HAP-1 (cell line): ENCODE measurements at regions of chr7 and their contacts with region 1.

Region 1: GRCh38 chr7:87416682-87417587 is 58.5 kb downstream of the ABCB4 start:
- DNase-seq: peak; percentile 64 to 80
- H3K4me3 ChIP-seq: no peak overlapping the region
- H3K4me1 ChIP-seq: no peaks in the 10 kb centered on the region
- H3K27me3 ChIP-seq: no peaks in the 10 kb centered on the region

Region 2: GRCh38 chr7:87312215-87312865 is 104.6 kb before region 1 on chr7:
- in situ Hi-C with region 1: loop called (anchors 5 kb)
- DNase-seq: peak; percentile 45 to 70
- H3K4me3 ChIP-seq: no peak overlapping the region
- H3K4me1 ChIP-seq: no peaks in the 10 kb centered on the region
- H3K27me3 ChIP-seq: no peaks in the 10 kb centered on the region

Region 3: DNA sequence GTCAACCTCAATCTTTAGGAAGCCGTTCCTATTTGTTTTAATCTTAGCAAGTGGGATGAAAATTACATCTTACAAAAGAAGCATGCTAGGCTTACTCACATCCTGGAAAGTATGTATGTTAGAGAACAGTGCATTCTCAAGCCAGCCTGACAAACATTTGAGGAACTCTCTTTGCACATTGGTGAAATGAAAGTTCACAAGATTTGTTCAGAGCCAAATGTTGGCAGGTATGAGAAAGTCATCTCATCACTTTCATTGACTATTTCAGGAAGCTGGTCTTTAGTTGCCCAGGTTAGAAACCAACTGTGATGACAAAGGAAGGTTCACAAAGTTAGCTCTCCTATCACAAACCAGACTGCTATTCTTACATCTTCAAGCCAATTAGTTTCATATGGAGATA is 126.7 kb after region 1 on chr7:
- in situ Hi-C with region 1: no loop called
- DNase-seq: no peak
- H3K4me3 ChIP-seq: no peak overlapping the region
- H3K4me1 ChIP-seq: no peaks in the 10 kb centered on the region
- H3K27me3 ChIP-seq: no peaks in the 10 kb centered on the region